ENCODE measurements at regions of chr7 and their contacts with region 1.

Region 1: GRCh38 chr7:114956702-114957101 is 34.8 kb downstream of the MDFIC start:
- DNase-seq: no peak
- CTCF ChIP-seq: no peak

Region 2: GRCh38 chr7:114255404-114255841 is 701.3 kb before region 1 on chr7:
- CTCF ChIA-PET with region 1: no interaction called
- POLR2A ChIA-PET with region 1: no interaction called
- DNase-seq: no peak
- CTCF ChIP-seq: no peak

Region 3: DNA sequence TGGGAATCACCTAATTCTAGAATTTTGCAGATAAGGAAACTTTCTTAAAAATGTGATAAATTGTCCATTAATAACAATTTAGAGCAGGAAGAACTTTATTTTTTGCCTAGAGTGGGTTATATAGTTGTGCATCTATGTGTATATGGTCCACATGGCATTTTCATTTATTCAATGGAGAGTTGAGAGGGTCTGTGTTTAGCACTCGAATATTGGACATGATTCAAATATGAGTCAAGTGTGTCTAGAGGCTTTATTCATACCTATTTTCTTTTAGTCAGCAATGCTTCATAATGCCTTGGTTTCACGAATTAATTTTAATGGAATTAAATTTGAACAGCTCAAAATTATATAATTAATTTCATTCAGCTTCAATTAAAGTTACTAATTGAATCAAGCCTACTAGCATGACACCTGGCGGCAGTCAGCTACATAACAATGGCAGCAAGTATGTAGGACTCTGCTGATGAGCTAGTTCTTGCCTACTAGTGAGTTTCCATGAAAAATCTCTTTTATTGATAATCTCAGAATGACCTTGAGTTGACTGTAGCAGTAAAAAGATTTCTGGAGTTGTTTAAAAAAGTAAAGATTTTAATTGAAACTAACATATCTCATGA is 17.1 kb before region 1 on chr7:
- CTCF ChIA-PET with region 1: interaction called, 53 read pairs
- POLR2A ChIA-PET with region 1: no interaction called
- DNase-seq: no peak
- CTCF ChIP-seq: peak; percentile 60

Region 4: DNA sequence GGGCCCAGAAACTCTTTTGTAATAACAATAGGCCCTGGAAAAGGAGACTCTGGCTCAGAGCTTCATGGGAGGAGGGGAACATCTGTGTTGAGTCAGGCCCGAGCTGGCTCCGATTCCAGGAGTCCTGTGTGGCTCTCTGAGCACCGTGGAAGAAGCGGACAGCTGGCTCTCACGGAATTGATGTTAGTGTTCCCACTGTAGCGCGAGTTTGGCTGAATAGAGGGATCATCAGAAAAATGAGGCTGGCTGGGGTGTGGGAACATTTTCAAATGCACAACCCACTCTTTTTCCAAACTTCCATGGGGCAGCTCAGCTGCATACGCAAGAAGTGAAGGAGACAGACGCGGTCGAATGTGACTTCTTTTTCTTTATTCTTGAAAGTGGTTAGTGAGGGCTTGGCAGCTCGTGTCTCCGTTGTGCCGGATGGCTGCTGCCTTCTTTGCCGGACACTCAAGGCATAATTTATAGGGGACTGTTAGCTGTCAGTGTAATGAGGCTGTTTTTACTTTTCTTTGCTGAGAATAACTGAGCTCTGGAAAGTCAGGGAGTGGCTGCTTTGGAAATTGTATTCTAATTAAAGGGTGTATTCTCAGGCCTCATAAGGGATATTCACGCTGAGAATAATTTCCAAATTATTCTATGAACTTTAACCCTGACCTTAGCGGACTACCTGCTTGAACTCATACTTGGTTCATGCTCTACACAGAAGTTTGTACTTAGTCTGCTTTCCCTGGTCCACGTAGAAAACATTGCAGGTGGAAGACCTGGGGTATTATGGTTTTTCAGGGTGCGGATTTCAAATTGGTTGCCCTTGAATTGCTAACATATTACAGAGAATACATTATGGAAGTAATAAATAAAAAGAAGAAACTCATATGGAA is 11.7 kb before region 1 on chr7:
- CTCF ChIA-PET with region 1: interaction called, 53 read pairs
- POLR2A ChIA-PET with region 1: no interaction called
- DNase-seq: no peak
- CTCF ChIP-seq: no peak

Region 5: GRCh38 chr7:114973147-114973546 is 16.4 kb after region 1 on chr7:
- CTCF ChIA-PET with region 1: interaction called, 12 read pairs
- POLR2A ChIA-PET with region 1: no interaction called
- DNase-seq: no peak
- CTCF ChIP-seq: no peak

Region 6: GRCh38 chr7:115249080-115249479 is 292.4 kb after region 1 on chr7:
- CTCF ChIA-PET with region 1: no interaction called
- POLR2A ChIA-PET with region 1: no interaction called
- DNase-seq: no peak
- CTCF ChIP-seq: no peak